CD4-positive, alpha-beta T cell (primary cell): ENCODE measurements at regions of chr17 and their contacts with region 1.

Region 1: DNA sequence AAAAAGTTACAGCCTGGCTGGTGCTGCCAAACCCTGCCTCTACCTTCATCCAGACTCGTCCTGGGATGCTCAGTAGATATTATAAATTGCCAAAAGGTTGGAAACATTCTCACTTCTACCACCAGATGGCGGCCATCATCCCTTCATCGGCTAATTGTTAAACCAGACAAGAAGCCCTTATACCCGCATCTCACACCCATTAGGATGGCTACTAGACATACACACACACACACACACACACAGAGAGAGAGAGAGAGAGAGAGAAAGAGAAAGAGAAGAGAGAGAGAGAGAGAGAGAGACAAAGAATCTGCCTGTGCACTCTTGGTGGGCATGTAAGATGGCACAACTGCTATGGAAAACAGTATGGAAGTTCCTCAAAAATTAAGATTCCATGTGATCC is 15.0 kb upstream of the SCIMP start:
- DNase-seq: peak; percentile 26 to 83 (median 54)
- ATAC-seq: peak; percentile 94
- H3K4me3 ChIP-seq: no peak overlapping the region
- H3K4me3 Mint-ChIP-seq: peak overlapping the region; percentile 34
- H3K27ac ChIP-seq: no peak overlapping the region
- H3K27ac Mint-ChIP-seq: peak overlapping the region; percentile 42
- H3K4me1 ChIP-seq: peaks cover 11% of the 10 kb centered on the region
- H3K4me1 Mint-ChIP-seq: peaks cover 6% of the 10 kb centered on the region
- H3K27me3 ChIP-seq: no peaks in the 10 kb centered on the region
- H3K27me3 Mint-ChIP-seq: no peaks in the 10 kb centered on the region
- CTCF ChIP-seq: peak; percentile 66

Region 2: DNA sequence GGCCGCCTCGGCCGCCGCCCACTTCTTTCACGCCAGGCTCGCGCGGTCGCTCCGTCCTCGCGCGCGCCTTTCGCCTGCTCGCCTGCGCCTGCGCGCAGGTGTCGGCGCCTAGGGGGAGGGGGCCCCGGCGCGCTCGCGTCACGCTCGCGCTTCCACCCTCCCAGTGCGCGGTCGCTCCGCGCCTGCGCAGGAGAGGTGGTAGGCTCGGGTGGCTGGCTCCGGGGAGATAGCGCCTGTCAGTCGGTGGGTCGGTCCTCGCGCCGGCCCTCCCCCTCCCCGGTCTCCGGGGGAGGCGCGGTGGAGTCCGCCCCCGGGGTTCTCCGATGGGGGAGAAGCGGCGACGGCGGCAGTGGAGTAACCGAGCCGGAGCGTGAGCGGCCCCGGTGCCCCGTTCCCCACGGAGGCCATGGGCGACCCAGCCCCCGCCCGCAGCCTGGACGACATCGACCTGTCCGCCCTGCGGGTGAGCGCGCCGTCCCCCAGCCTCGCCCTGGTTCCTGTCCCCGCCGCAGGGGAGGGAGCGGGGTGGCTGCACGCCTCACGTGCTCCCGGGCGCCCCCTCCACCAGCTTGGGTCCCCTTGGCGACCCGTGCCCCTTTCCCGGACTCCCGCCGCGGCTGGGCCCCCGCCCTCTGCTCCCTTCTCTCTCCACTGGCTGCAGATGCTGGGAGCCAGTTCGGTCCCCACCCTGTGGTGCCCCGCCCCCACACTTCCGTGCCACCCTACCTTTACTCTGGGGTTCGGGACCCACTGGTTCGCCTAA is 416.3 kb before region 1 on chr17 and contains the start of gene MINK1:
- CTCF ChIA-PET with region 1: no interaction called
- POLR2A ChIA-PET with region 1: no interaction called
- intact Hi-C with region 1: no loop called
- DNase-seq: peak; percentile 76 to 98 (median 88)
- ATAC-seq: peak; percentile 87
- H3K4me3 ChIP-seq: peak within 1 kb of the TSS; percentile 85
- H3K4me3 Mint-ChIP-seq: peak within 1 kb of the TSS; percentile 94
- H3K27ac ChIP-seq: peak within 1 kb of the TSS; percentile 63 to 74
- H3K27ac Mint-ChIP-seq: peak within 1 kb of the TSS; percentile 80
- H3K4me1 ChIP-seq: peaks cover 32% of the 10 kb centered on the region
- H3K4me1 Mint-ChIP-seq: peaks cover 48% of the 10 kb centered on the region
- H3K27me3 ChIP-seq: no peaks in the 10 kb centered on the region
- H3K27me3 Mint-ChIP-seq: no peaks in the 10 kb centered on the region
- CTCF ChIP-seq: no peak
- total RNA-seq, gene MINK1: 163 to 171 TPM

Region 3: GRCh38 chr17:5198472-5198871 is 51.1 kb before region 1 on chr17:
- CTCF ChIA-PET with region 1: no interaction called
- POLR2A ChIA-PET with region 1: no interaction called
- intact Hi-C with region 1: loop called (anchors 5 kb)
- DNase-seq: peak in 1 of 14 experiments; percentile 16
- ATAC-seq: no peak
- H3K4me3 ChIP-seq: no peak overlapping the region
- H3K4me3 Mint-ChIP-seq: no peak overlapping the region
- H3K27ac ChIP-seq: no peak overlapping the region
- H3K27ac Mint-ChIP-seq: no peak overlapping the region
- H3K4me1 ChIP-seq: peaks cover 10% of the 10 kb centered on the region
- H3K4me1 Mint-ChIP-seq: peaks cover 4% of the 10 kb centered on the region
- H3K27me3 ChIP-seq: no peaks in the 10 kb centered on the region
- H3K27me3 Mint-ChIP-seq: no peaks in the 10 kb centered on the region
- CTCF ChIP-seq: no peak

Region 4: GRCh38 chr17:5281814-5282653 is 32.4 kb after region 1 on chr17 and contains the start of gene RABEP1:
- CTCF ChIA-PET with region 1: no interaction called
- POLR2A ChIA-PET with region 1: no interaction called
- intact Hi-C with region 1: loop called (anchors 5 kb)
- DNase-seq: peak; percentile 89 to 97 (median 94)
- ATAC-seq: peak; percentile 80
- H3K4me3 ChIP-seq: peak within 1 kb of the TSS; percentile 76
- H3K4me3 Mint-ChIP-seq: peak within 1 kb of the TSS; percentile 97
- H3K27ac ChIP-seq: peak within 1 kb of the TSS in 1 of 2 donors; percentile 64
- H3K27ac Mint-ChIP-seq: peak within 1 kb of the TSS; percentile 91
- H3K4me1 ChIP-seq: peaks cover 26% of the 10 kb centered on the region
- H3K4me1 Mint-ChIP-seq: peaks cover 40% of the 10 kb centered on the region
- H3K27me3 ChIP-seq: no peaks in the 10 kb centered on the region
- H3K27me3 Mint-ChIP-seq: no peaks in the 10 kb centered on the region
- CTCF ChIP-seq: peak; percentile 43
- total RNA-seq, gene RABEP1: 27.4 to 31.8 TPM

Region 5: DNA sequence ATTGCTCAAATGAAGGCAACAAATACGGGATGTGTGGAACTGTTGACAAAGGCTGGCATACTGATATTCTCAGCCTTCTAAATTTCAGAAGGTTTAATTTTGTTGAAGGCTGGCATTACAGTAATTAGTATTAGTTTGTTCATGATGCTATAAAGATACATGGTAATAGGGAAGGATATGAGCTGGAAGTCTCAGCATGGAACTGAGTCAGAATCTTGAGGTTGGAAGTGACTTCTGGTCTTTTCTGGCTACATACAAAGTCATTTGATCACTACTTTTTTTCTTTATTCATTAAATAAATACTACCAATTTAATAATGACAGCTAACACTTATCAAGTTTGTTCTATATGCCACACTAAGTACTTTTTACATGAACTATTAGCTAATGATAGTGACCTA is 55.0 kb after region 1 on chr17:
- CTCF ChIA-PET with region 1: interaction called, 3 read pairs
- POLR2A ChIA-PET with region 1: no interaction called
- intact Hi-C with region 1: loop called (anchors 1 kb)
- DNase-seq: no peak
- ATAC-seq: no peak
- H3K4me3 ChIP-seq: no peak overlapping the region
- H3K4me3 Mint-ChIP-seq: no peak overlapping the region
- H3K27ac ChIP-seq: no peak overlapping the region
- H3K27ac Mint-ChIP-seq: no peak overlapping the region
- H3K4me1 ChIP-seq: peaks cover 2% of the 10 kb centered on the region
- H3K4me1 Mint-ChIP-seq: peaks cover 66% of the 10 kb centered on the region
- H3K27me3 ChIP-seq: no peaks in the 10 kb centered on the region
- H3K27me3 Mint-ChIP-seq: no peaks in the 10 kb centered on the region
- CTCF ChIP-seq: no peak

Region 6: DNA sequence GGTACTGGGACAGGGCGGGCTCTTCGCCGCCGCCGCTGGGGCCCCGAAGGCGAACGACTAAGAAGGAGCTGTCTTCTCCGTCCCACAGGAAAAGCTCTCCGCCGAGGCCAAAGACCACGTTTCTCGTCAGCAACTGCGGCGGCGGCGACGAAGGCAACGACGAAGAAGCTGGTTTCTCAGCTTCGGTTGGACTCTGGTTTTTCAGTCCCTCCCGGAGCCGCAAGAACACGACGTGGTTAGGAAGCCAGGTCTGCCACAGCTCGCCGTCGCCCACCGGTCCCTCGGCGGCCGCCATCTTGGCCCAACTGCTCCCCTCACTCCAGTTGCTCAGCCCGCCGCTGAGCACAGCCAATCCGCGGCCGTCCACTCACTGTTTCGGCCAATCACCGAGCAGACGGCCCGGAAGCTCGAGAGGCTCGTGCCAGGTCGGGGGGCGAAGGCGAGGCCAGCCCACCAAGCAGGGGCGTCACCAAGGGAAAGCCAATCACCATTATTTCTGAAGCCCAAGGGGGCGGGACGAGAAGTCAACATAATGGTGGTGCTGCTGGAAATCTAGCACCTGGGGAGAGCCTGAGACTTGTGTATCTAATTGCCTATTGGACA is 169.8 kb after region 1 on chr17 and contains the start of gene NUP88:
- CTCF ChIA-PET with region 1: no interaction called
- POLR2A ChIA-PET with region 1: no interaction called
- intact Hi-C with region 1: no loop called
- DNase-seq: peak; percentile 87 to 98 (median 92)
- ATAC-seq: peak; percentile 86
- H3K4me3 ChIP-seq: peak within 1 kb of the TSS; percentile 76
- H3K4me3 Mint-ChIP-seq: peak within 1 kb of the TSS; percentile 93
- H3K27ac ChIP-seq: peak within 1 kb of the TSS; percentile 98 to 99
- H3K27ac Mint-ChIP-seq: peak within 1 kb of the TSS; percentile 98
- H3K4me1 ChIP-seq: peaks cover 31% of the 10 kb centered on the region
- H3K4me1 Mint-ChIP-seq: peaks cover 59% of the 10 kb centered on the region
- H3K27me3 ChIP-seq: no peaks in the 10 kb centered on the region
- H3K27me3 Mint-ChIP-seq: no peaks in the 10 kb centered on the region
- CTCF ChIP-seq: no peak
- total RNA-seq, gene NUP88: 129 to 142 TPM

Region 7: GRCh38 chr17:5438716-5439445 is 189.3 kb after region 1 on chr17 and contains the start of gene C1QBP:
- CTCF ChIA-PET with region 1: interaction called, 4 read pairs
- POLR2A ChIA-PET with region 1: no interaction called
- intact Hi-C with region 1: loop called (anchors 1 kb)
- DNase-seq: peak; percentile 85 to 97 (median 91)
- ATAC-seq: peak; percentile 93
- H3K4me3 ChIP-seq: peak within 1 kb of the TSS; percentile 70
- H3K4me3 Mint-ChIP-seq: peak within 1 kb of the TSS; percentile 89
- H3K27ac ChIP-seq: peak within 1 kb of the TSS; percentile 71 to 74
- H3K27ac Mint-ChIP-seq: peak within 1 kb of the TSS; percentile 86
- H3K4me1 ChIP-seq: peaks cover 33% of the 10 kb centered on the region
- H3K4me1 Mint-ChIP-seq: peaks cover 35% of the 10 kb centered on the region
- H3K27me3 ChIP-seq: no peaks in the 10 kb centered on the region
- H3K27me3 Mint-ChIP-seq: no peaks in the 10 kb centered on the region
- CTCF ChIP-seq: peak; percentile 96
- total RNA-seq, gene C1QBP: 59.9 to 62.9 TPM

Region 8: DNA sequence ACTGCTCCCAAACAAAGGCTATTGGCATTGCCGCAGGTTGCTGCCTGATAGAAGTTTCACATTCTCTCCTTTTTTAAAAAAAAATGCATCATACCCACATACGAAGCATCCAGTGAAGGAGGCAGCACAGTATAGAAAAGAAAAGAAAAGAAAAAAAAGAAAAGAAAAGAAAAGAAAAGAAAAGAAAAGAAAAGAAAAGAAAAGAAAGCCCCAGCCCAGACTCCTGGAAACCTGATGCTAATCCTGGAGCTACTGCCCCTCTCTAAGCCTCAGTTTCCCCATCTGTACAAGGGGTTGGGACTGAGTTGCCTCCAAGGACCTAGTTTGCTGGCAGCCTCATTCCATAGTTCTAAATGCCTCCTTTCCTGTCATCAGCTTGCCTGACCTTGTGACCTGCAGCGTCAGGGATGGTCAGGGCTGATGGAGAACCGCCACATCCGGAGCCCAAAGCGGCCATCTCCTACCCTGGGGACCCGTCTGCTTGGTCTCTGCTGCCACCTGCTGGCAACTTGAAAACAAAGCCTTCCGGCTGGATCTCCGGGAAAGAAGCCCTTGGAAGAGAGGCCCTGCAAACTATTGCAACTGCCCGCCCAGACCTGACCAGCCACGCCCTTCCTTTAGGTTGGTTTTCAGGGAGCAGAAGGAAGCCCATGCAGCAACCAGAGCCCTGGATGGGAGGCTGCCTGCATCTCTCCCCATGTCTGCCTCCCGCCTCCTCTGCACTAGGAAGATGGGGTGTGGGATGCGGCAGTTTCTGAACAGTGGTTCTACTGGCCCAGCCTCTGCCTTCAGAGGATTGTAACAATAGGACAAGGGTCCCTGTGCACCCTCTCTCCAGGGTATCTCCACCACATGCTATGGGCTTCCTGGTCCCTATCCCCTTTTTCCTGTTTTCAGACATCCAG is 1172.3 kb after region 1 on chr17:
- CTCF ChIA-PET with region 1: no interaction called
- POLR2A ChIA-PET with region 1: no interaction called
- intact Hi-C with region 1: loop called (anchors 5 to 10 kb)
- DNase-seq: peak; percentile 46 to 83 (median 65)
- ATAC-seq: peak; percentile 62
- H3K4me3 ChIP-seq: no peak overlapping the region
- H3K4me3 Mint-ChIP-seq: no peak overlapping the region
- H3K27ac ChIP-seq: no peak overlapping the region
- H3K27ac Mint-ChIP-seq: no peak overlapping the region
- H3K4me1 ChIP-seq: peaks cover 15% of the 10 kb centered on the region
- H3K4me1 Mint-ChIP-seq: peaks cover 2% of the 10 kb centered on the region
- H3K27me3 ChIP-seq: peaks cover 0 to 5% of the 10 kb centered on the region in 2 experiments
- H3K27me3 Mint-ChIP-seq: peaks cover 36% of the 10 kb centered on the region
- CTCF ChIP-seq: peak; percentile 81